Aorta (tissue), 5 donors: ENCODE measurements at regions of chr9 and their contacts with region 1.

Region 1: GRCh38 chr9:70043689-70044489 is at the start of gene MAMDC2:
- DNase-seq: peak; percentile 66 to 81
- ATAC-seq: peak; percentile 76
- H3K4me3 ChIP-seq: peak within 1 kb of the TSS; percentile 42 to 55
- H3K27ac ChIP-seq: peak within 1 kb of the TSS in 1 of 2 donors; percentile 9
- H3K4me1 ChIP-seq: peaks cover 0 to 2% of the 10 kb centered on the region in 2 donors
- H3K27me3 ChIP-seq: no peaks in the 10 kb centered on the region
- total RNA-seq, gene MAMDC2: 5.9 to 14.6 TPM

Region 2: DNA sequence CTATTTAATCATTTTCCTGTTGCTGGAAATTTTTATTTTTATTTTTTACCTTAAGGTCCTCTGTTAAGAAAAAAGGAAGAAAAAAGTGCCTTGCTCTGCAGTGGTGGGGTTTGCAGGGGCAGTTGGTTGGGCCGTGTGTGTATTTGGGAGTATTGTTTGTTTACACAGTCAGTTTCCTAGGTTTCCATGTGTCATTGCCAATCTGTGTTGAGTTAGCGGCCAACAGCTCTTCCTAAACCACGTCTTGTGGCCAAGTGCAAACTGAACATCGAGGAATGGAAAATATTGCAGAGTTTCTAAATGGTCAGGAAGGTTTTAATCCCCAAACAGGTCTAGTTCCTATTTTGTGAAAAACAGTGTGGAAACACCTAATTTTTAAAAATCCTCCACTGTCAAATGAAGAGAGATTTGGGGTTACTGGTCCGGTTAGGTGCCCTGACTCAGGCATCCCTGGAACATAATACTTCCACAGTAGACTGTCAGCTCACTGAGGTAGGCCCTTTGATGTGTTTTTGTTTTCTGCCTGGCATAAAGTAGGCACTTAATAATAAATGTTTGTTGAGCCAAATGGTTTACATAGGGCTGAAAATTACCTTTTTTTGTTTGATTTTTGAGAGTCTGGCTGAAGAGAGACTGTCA is 36.7 kb after region 1 on chr9:
- intact Hi-C with region 1: loop called (anchors 5 kb)
- DNase-seq: peak in 1 of 2 donors; percentile 46
- ATAC-seq: peak; percentile 90
- H3K4me3 ChIP-seq: no peak overlapping the region
- H3K27ac ChIP-seq: peak overlapping the region; percentile 45 to 56
- H3K4me1 ChIP-seq: no peaks in the 10 kb centered on the region
- H3K27me3 ChIP-seq: no peaks in the 10 kb centered on the region